Panc1 (cell line): ENCODE measurements at regions of chr10 and their contacts with region 1.

Region 1: GRCh38 chr10:101832325-101832771 is 11.3 kb downstream of the KCNIP2 start:
- DNase-seq: no peak
- ATAC-seq: no peak
- H3K4me3 ChIP-seq: no peak overlapping the region
- H3K27ac ChIP-seq: no peak overlapping the region
- H3K4me1 ChIP-seq: peaks cover 12% of the 10 kb centered on the region
- H3K27me3 ChIP-seq: no peaks in the 10 kb centered on the region
- CTCF ChIP-seq: no peak

Region 2: GRCh38 chr10:102055647-102056419 is 223.5 kb after region 1 on chr10 and contains the start of gene ARMH3:
- CTCF ChIA-PET with region 1: interaction called, 13 read pairs
- POLR2A ChIA-PET with region 1: no interaction called
- in situ Hi-C with region 1: no loop called
- intact Hi-C with region 1: no loop called
- DNase-seq: peak; percentile 93
- ATAC-seq: peak; percentile 98
- H3K4me3 ChIP-seq: peak within 1 kb of the TSS; percentile 79 to 99
- H3K27ac ChIP-seq: peak within 1 kb of the TSS; percentile 95
- H3K4me1 ChIP-seq: peaks cover 4% of the 10 kb centered on the region; the same call in 1 of the 2 replicates
- H3K27me3 ChIP-seq: no peaks in the 10 kb centered on the region
- CTCF ChIP-seq: no peak
- total RNA-seq, gene ARMH3: 30.6 TPM